GM13977 (cell line): ENCODE measurements at regions of chr1 and their contacts with region 1.

Region 1: GRCh38 chr1:88595355-88596002 is 88.6 kb upstream of the PKN2 start:
- DNase-seq: peak; percentile 25
- CTCF ChIP-seq: peak; percentile 46

Region 2: DNA sequence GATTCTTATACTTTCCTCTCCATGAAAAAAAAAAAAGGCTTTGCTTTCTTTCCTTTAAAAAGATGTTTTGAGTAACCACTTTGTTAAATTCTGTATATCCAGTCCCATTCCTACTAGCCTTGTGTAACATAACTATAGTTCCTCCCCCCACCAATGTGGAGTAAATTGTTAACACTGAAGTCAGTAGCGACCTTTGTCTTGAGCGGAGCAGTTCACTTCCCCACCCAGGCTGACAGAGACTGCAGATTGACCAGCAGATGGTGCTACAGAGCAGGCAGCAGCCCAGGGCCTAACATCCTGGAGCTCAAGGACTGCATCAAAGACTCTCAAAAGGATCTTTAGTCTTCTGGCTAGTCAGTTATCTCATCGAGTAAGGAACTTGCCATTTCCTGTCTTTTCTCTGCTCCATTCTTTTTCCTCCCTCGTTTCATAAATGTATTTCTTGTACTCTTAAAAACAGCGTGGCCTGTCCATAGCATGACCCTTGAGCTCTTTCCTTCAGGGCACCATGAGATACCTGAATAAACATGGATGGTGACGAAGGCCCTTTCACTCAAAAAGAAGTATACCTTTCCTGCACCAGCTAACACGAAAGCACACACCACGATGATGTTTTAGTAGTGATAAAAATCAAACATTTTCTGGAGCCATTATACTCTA is 414.9 kb before region 1 on chr1:
- in situ Hi-C with region 1: loop called (anchors 25 kb)
- DNase-seq: peak; percentile 29
- CTCF ChIP-seq: peak; percentile 99